Stomach (tissue), 19 donors: ENCODE measurements at regions of chr15 and their contacts with region 1.

Region 1: DNA sequence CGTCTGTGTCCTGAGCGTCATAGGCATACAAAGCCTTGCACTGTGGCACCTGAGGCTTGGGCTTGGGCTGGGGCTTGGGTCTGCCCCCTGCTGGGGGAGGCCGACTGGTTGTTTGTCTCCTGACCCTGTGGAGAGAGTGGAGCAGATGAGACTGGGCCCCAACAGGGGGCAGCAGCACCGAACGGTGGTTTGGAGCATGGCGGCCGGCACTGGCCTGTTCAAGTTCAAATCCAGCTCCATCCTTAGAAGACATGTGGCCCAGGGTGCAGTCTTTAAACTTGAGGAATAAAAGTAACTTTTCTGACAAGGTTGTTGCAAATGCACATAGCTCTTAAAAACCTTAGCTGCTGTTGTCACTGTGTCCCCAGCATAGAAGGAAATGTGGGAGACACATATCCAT is 33.3 kb downstream of the CCNB2 start:
- DNase-seq: peak; percentile 50 to 57
- H3K4me3 ChIP-seq: no peak overlapping the region
- H3K27ac ChIP-seq: no peak overlapping the region
- H3K4me1 ChIP-seq: no peaks in the 10 kb centered on the region
- H3K27me3 ChIP-seq: no peaks in the 10 kb centered on the region
- CTCF ChIP-seq: peak in 5 of 7 experiments; percentile 18 to 52 (median 40)
- EP300 ChIP-seq: no peak
- POLR2A ChIP-seq: no peak

Region 2: GRCh38 chr15:58506064-58506490 is 632.2 kb before region 1 on chr15:
- intact Hi-C with region 1: loop called (anchors 10 kb)
- DNase-seq: peak in 1 of 2 donors; percentile 39
- H3K4me3 ChIP-seq: no peak overlapping the region
- H3K27ac ChIP-seq: peak overlapping the region in 2 of 5 donors; percentile 52 to 64
- H3K4me1 ChIP-seq: peaks cover 0 to 14% (median 3%) of the 10 kb centered on the region in 4 donors
- H3K27me3 ChIP-seq: no peaks in the 10 kb centered on the region
- CTCF ChIP-seq: no peak
- EP300 ChIP-seq: no peak
- POLR2A ChIP-seq: no peak

Region 3: GRCh38 chr15:59543721-59544547 is 405.7 kb after region 1 on chr15:
- intact Hi-C with region 1: no loop called
- DNase-seq: peak in 1 of 2 donors; percentile 68
- H3K4me3 ChIP-seq: no peak overlapping the region
- H3K27ac ChIP-seq: no peak overlapping the region
- H3K4me1 ChIP-seq: peaks cover 0 to 7% (median 2%) of the 10 kb centered on the region in 4 donors
- H3K27me3 ChIP-seq: no peaks in the 10 kb centered on the region
- CTCF ChIP-seq: no peak
- EP300 ChIP-seq: no peak
- POLR2A ChIP-seq: no peak